ENCODE measurements at regions of chr10 and their contacts with region 1.

Region 1: GRCh38 chr10:7541137-7542095 is 125.3 kb downstream of the ITIH5 start:
- DNase-seq: no peak
- H3K4me3 ChIP-seq: peak overlapping the region in 3 of 4 donors; percentile 13 to 29 (median 16)
- H3K27ac ChIP-seq: peak overlapping the region; percentile 78 to 89 (median 80)
- H3K4me1 ChIP-seq: peaks cover 14 to 61% (median 50%) of the 10 kb centered on the region in 4 donors
- H3K27me3 ChIP-seq: no peaks in the 10 kb centered on the region
- CTCF ChIP-seq: no peak
- EP300 ChIP-seq: no peak
- POLR2A ChIP-seq: no peak

Region 2: DNA sequence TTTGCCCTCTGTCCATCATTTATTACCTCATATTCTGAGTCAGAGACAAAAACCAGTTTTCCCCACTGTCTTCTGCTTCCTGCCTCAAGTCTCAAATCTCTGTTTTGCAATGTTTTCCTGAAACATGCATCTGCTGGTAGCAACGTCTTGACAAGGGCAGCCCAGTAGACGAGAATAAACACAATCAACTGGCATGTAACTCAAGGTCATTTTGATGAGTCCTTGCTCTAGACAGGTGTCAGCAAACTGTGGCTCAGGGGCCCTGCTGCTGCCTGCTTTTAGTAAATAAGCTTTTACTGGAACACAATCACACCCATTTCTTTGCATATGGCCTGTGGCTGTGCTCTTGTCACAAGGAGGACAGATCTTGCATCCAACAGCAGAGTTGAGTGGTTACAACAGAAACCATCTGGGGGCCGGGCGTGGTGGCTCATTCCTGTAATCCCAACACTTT is 65.6 kb after region 1 on chr10:
- intact Hi-C with region 1: loop called (anchors 5 kb)
- DNase-seq: no peak
- H3K4me3 ChIP-seq: no peak overlapping the region
- H3K27ac ChIP-seq: peak overlapping the region; percentile 7 to 42 (median 34)
- H3K4me1 ChIP-seq: peaks cover 11 to 58% (median 48%) of the 10 kb centered on the region in 4 donors
- H3K27me3 ChIP-seq: no peaks in the 10 kb centered on the region
- CTCF ChIP-seq: no peak
- EP300 ChIP-seq: no peak
- POLR2A ChIP-seq: no peak